WTC11 (cell line): ENCODE measurements at regions of chr1 and their contacts with region 1.

Region 1: DNA sequence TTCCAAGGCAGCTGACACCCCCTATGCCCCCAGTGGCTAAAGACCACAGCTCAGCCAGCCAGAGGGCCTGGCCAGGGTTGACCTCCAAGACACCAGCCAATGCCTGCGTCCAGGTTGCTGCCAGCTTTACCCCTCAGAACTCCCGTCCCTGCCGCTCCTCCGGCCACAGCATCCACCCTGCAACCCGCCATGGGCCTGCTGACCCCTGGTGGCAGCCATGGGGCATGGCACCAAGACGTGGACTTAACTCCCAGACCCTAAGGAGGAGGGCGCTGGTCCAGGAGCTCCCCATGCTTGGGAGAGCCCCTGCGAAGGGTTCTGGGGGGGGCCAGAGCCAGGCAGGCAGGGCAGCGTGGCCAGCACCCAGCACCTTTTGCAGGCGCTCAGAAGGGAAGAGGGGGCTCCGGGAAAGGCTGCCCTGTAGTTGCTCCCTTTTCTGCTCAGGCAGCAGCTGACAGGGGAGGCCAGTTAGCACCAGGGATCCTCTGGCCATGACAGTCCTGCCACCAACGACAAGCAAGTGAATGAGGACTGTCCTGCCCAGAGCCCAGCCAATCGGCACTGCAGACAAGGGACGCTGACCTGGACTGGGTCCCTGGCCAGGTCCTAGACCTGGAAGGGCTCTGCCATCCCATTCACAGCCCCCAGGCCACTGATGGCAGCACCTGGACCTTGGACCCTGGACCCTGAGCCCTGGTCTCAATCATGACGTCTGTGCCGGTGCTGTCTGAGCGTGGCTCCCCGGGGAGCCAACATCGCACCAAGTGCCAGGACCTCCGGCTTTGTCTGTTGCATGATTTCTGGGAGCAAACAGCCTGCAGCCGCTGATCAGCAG is 246.2 kb downstream of the NPHP4 start:
- DNase-seq: peak; percentile 86
- ATAC-seq: peak; percentile 96
- H3K4me3 Mint-ChIP-seq: no peak overlapping the region
- H3K27ac Mint-ChIP-seq: no peak overlapping the region
- H3K4me1 Mint-ChIP-seq: peaks cover 21% of the 10 kb centered on the region
- H3K27me3 Mint-ChIP-seq: no peaks in the 10 kb centered on the region; the same call in 1 of the 2 replicates
- CTCF ChIP-seq: peak; percentile 95

Region 2: DNA sequence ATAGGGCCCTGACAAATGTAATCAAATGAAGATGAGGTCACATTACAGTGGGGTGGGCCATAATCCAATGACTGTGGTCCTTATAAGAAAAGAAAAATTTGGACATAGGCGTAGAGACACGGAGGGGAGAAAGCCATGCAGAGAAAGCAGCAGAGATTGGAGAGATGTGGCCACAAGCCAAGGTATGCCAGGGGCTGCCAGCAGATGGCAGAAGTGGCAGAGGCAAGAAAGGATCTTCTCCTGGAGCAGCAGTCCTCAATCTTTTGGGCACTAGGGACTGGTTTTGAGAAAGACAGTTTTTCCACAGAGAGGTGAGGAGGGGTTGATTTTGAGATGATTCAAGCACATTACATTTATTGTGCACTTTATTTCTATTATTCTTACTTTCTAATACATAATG is 108.8 kb before region 1 on chr1:
- CTCF ChIA-PET with region 1: interaction called, 23 read pairs
- POLR2A ChIA-PET with region 1: interaction called, 3 read pairs
- DNase-seq: no peak
- ATAC-seq: no peak
- H3K4me3 Mint-ChIP-seq: no peak overlapping the region
- H3K27ac Mint-ChIP-seq: no peak overlapping the region
- H3K4me1 Mint-ChIP-seq: no peaks in the 10 kb centered on the region
- H3K27me3 Mint-ChIP-seq: peaks cover 7% of the 10 kb centered on the region
- CTCF ChIP-seq: no peak

Region 3: DNA sequence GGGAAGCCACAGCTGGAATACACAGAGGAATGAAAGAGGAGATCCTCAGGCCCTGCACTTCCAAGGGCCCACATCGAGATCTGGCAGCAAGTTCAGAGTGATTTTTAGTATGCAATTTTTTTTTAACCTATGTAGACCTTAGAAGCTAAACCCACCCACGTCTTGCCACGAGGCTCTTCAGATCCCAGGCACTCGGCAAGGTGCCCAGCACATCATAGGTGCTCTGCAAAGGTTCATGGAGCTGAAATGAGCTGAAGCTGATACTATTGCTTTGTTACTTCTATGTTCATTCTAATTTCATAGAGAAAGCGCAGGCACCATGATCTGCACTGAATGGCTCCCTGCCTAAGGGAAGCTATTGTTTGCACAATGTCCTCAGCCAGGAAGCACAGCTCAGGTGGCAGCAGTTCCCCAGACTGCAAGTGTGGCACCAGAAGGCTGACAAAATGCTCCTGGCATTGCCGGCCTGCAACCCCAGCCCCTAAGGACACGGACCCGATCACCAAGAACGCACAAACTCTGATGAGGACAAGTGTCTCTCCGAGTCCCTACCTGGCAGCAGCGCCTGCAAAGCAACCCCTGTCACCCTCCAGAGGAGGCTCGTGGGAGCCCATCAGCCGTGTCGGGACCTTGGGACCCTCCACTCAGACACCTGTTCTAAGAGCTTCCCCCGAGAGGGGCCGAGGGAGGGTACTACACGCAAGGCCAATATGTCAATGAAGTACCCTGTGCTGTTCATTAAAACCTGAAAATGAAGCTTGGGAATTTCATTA is 17.9 kb before region 1 on chr1:
- CTCF ChIA-PET with region 1: interaction called, 27 read pairs
- POLR2A ChIA-PET with region 1: no interaction called
- DNase-seq: peak; percentile 2
- ATAC-seq: no peak
- H3K4me3 Mint-ChIP-seq: no peak overlapping the region
- H3K27ac Mint-ChIP-seq: no peak overlapping the region
- H3K4me1 Mint-ChIP-seq: peaks cover 9% of the 10 kb centered on the region
- H3K27me3 Mint-ChIP-seq: no peaks in the 10 kb centered on the region
- CTCF ChIP-seq: no peak

Region 4: DNA sequence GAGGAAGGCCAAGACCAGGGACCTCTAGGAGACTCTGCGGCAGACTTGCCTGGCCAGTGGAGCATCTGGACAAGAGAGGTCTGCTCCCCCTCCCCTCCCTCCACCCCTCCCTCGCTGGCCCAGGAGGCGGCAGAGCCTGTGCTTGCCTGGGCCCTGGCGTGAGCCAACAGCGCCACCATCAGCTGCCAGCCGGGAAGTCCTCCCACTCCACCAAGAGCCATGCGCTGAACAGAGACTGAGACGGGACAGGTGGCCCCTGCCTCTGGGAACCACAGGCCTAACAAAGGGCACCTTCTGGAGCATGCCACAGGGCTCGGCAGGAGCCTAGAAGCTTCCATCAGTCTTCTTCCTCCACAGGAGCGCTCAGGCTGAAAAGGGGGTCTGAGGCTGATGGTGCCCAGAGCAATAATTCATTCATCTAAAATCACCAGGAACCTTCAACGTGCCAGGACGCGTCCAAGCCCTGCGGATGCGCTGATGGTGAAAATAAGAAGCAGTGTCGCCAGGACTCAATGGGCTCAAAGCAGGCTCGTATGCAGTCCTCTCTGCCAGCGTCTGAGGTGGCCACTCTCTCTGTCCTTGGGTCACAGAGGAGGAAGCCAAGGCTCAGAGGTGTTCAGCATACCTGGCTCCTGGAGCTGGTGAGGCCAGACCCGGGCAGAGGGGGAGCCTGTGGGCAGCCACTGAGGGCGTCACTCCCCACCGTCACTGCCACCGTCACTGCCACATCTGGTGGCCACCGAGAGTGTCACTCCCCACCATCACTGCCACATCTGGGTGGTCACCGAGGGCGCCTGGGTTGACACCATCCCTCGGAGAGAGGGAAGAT is 85.0 kb after region 1 on chr1:
- CTCF ChIA-PET with region 1: interaction called, 45 read pairs
- POLR2A ChIA-PET with region 1: no interaction called
- DNase-seq: peak; percentile 93
- ATAC-seq: peak; percentile 91
- H3K4me3 Mint-ChIP-seq: no peak overlapping the region
- H3K27ac Mint-ChIP-seq: no peak overlapping the region
- H3K4me1 Mint-ChIP-seq: peaks cover 33% of the 10 kb centered on the region
- H3K27me3 Mint-ChIP-seq: peaks cover 7% of the 10 kb centered on the region
- CTCF ChIP-seq: peak; percentile 36; the same call in 1 of the 2 replicates

Region 5: GRCh38 chr1:5877761-5878530 is 132.0 kb after region 1 on chr1:
- CTCF ChIA-PET with region 1: interaction called, 14 read pairs
- POLR2A ChIA-PET with region 1: no interaction called
- DNase-seq: no peak
- ATAC-seq: no peak
- H3K4me3 Mint-ChIP-seq: no peak overlapping the region
- H3K27ac Mint-ChIP-seq: no peak overlapping the region
- H3K4me1 Mint-ChIP-seq: no peaks in the 10 kb centered on the region
- H3K27me3 Mint-ChIP-seq: no peaks in the 10 kb centered on the region
- CTCF ChIP-seq: no peak